Dorsolateral prefrontal cortex (tissue), 120 donors: ENCODE measurements at regions of chr18 and their contacts with region 1.

Region 1: DNA sequence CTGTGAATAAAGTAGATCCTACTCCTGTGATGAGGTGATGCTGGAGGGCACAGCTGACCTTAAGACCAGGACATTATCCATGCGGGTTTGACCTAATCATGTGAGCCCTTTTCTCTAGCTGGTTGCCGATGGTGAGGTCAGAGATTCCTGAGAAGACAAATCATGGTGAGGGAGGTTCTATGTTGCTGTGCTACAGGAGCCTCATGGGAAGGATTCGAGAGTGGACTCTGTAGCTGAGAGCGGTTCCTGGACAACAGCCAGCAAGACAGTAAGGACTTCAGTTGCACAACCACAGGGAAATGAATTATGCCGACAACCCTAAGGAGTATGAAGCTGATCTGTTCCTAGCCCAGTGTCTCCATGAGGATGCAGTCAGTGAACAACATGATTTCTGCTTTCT is 80.4 kb downstream of the EPB41L3 start:
- DNase-seq: no peak
- H3K4me3 ChIP-seq: no peak overlapping the region
- H3K27ac ChIP-seq: no peak overlapping the region
- H3K27me3 ChIP-seq: no peaks in the 10 kb centered on the region
- CTCF ChIP-seq: no peak

Region 2: DNA sequence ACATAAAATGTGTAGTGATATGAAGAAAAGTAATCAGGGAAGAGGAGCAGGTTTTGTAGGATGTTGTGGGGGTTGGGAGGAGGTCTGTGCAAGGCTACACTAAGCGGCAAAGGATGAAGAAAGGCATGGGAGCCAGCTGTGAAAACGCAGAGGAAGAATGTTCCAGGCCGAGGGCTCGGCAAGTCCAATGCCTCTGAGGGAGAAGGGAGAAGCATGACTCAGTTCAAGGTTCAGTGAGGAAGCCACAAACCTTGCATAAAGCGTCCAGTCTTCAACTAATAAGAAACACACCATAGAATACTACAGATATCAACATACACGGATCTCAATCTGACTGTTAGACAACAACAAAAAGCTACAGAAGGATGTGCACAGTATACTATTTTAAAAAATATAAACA is 64.2 kb after region 1 on chr18:
- intact Hi-C with region 1: loop called in 1 of 2 experiments (anchors 10 kb)
- DNase-seq: no peak
- H3K4me3 ChIP-seq: no peak overlapping the region
- H3K27ac ChIP-seq: peak overlapping the region in 6 of 59 donors; percentile 5 to 65 (median 18)
- H3K27me3 ChIP-seq: no peaks in the 10 kb centered on the region
- CTCF ChIP-seq: no peak

Region 3: GRCh38 chr18:5673576-5673975 is 210.2 kb after region 1 on chr18:
- intact Hi-C with region 1: loop called in 1 of 2 experiments (anchors 10 kb)
- DNase-seq: no peak
- H3K4me3 ChIP-seq: no peak overlapping the region
- H3K27ac ChIP-seq: no peak overlapping the region
- H3K27me3 ChIP-seq: no peaks in the 10 kb centered on the region
- CTCF ChIP-seq: no peak